Activated CD8-positive, alpha-beta memory T cell treated with anti-CD3 and anti-CD28 coated beads, Interleukin-2, amount 10 ng/mL, durations not matched to agents 7 days and 5 days (primary cell): ENCODE measurements at regions of chr14 and their contacts with region 1.

Region 1: GRCh38 chr14:60331201-60332045 is 82.4 kb downstream of the PPM1A start:
- DNase-seq: peak; percentile 88
- ATAC-seq: peak; percentile 86
- H3K4me3 Mint-ChIP-seq: peak overlapping the region; percentile 88
- H3K27ac Mint-ChIP-seq: peak overlapping the region; percentile 98
- H3K4me1 Mint-ChIP-seq: peaks cover 38% of the 10 kb centered on the region
- H3K27me3 Mint-ChIP-seq: peaks cover 39% of the 10 kb centered on the region

Region 2: DNA sequence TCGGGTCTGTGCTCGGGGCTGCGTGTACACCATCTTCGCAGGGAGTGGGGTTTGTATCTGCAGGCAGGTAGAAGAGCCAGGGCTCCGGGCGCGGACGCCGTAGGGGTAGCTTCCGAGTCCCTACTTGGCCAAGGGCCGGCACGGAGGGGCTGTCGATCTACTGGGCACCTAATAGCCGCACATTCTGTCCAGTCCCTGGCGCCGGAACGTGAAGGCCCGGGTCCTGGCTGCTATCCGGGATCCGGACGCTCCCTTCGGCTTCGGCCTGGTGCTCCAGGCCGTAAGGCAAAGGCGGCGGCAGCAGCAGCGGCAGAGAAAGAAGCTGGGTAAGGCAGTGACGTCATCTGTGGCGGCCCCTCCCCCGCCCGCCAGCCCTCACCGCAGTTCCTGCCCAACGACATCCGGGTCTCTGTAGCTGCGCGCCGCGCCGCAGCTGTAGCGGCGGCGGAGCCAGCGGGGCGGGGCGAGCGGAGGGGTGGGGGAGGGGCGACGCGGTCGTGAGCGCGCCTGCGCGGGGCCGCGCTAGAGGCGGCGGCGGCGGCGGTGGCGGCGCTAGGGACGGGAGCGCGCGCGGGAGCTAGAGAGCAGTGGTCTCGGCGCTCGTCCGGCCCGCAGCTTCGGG is 82.6 kb before region 1 on chr14 and contains the start of gene PPM1A:
- CTCF ChIA-PET with region 1: interaction called, 25 read pairs
- DNase-seq: peak; percentile 95
- ATAC-seq: peak; percentile 76
- H3K4me3 Mint-ChIP-seq: peak within 1 kb of the TSS; percentile 86
- H3K27ac Mint-ChIP-seq: peak within 1 kb of the TSS; percentile 99
- H3K4me1 Mint-ChIP-seq: peaks cover 46% of the 10 kb centered on the region
- H3K27me3 Mint-ChIP-seq: no peaks in the 10 kb centered on the region
- total RNA-seq, gene PPM1A: 44.0 to 54.6 TPM

Region 3: GRCh38 chr14:60266021-60266937 is 65.1 kb before region 1 on chr14:
- CTCF ChIA-PET with region 1: interaction called, 21 read pairs
- DNase-seq: no peak
- ATAC-seq: no peak
- H3K4me3 Mint-ChIP-seq: no peak overlapping the region
- H3K27ac Mint-ChIP-seq: no peak overlapping the region
- H3K4me1 Mint-ChIP-seq: peaks cover under 1% of the 10 kb centered on the region
- H3K27me3 Mint-ChIP-seq: no peaks in the 10 kb centered on the region

Region 4: DNA sequence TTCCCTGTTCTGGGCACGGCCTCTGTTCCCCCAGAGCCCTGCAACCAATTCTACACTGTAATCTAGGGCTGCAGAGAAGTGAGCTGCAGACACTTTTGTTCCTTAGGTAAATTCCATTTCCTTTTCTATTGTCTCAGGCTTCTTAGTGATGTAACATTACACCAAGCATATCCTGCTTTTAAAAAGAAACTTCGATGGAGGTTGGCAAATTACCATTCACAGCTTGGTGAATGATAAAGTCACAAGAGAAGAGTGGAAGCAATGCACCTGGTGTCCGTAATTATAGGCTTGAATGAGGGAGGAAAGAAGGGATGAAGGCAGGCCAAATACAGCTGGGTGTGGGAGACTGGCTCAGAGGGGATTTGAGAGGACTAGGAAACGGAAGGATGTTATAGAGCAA is 13.8 kb before region 1 on chr14:
- CTCF ChIA-PET with region 1: interaction called, 11 read pairs
- DNase-seq: no peak
- ATAC-seq: no peak
- H3K4me3 Mint-ChIP-seq: no peak overlapping the region
- H3K27ac Mint-ChIP-seq: no peak overlapping the region
- H3K4me1 Mint-ChIP-seq: no peaks in the 10 kb centered on the region
- H3K27me3 Mint-ChIP-seq: peaks cover 16% of the 10 kb centered on the region

Region 5: DNA sequence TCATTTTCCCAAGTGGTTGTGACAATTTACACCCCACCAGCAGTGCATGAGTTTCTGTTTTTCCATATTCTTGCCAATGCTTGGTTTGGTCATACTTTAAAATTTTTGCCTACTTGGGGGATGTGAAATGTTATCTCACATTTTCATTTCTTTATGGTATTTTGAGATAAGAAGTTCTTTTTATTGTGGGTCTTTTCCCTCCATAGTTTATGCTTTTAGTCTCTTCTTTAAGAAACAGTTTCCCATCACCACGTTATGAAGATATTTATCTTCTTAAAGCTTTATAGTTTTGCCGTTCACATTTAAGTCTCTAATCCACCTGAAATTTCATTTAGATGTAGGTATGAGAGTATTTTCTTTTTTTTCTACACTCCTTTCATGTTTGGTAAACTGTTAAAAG is 13.3 kb after region 1 on chr14:
- CTCF ChIA-PET with region 1: interaction called, 28 read pairs
- DNase-seq: no peak
- ATAC-seq: no peak
- H3K4me3 Mint-ChIP-seq: no peak overlapping the region
- H3K27ac Mint-ChIP-seq: no peak overlapping the region
- H3K4me1 Mint-ChIP-seq: peaks cover 2% of the 10 kb centered on the region
- H3K27me3 Mint-ChIP-seq: peaks cover 22% of the 10 kb centered on the region

Region 6: DNA sequence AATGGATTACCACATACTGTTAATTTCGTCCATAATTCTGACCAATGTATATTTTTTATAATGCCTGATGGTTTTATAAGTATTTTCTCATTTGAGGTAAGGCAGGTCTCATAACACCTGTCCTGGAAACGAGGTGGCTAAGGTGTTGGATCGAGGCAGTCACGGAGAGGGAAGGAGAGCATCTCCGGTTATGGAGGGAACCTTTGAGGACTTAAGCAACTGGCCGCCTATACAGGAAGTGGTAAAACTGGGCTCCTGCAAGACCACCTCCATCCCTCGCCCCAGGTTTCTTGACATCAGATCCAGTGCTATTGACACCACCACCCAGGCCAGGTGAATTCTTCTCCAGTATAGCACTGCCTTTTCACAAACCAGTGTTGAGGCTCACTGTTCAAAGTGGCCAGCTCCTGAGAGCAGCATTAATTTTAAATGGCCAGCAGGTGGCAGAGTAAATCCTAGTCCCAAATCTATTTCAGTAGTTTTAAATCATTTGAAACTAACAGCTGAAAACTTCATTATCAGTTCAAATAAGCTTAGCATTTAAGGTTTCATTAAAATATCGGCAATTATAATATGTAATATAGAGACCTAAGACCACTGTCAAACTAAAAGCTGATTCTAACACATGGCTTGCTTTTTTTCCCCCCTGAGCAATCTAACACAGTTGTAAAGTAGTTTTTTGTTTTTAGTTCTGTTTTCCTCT is 18.4 kb after region 1 on chr14:
- CTCF ChIA-PET with region 1: interaction called, 28 read pairs
- DNase-seq: no peak
- ATAC-seq: no peak
- H3K4me3 Mint-ChIP-seq: no peak overlapping the region
- H3K27ac Mint-ChIP-seq: no peak overlapping the region
- H3K4me1 Mint-ChIP-seq: no peaks in the 10 kb centered on the region
- H3K27me3 Mint-ChIP-seq: peaks cover 25% of the 10 kb centered on the region

Region 7: GRCh38 chr14:60420050-60420449 is 88.6 kb after region 1 on chr14:
- CTCF ChIA-PET with region 1: no interaction called
- DNase-seq: no peak
- ATAC-seq: no peak
- H3K4me3 Mint-ChIP-seq: no peak overlapping the region
- H3K27ac Mint-ChIP-seq: no peak overlapping the region
- H3K4me1 Mint-ChIP-seq: no peaks in the 10 kb centered on the region
- H3K27me3 Mint-ChIP-seq: no peaks in the 10 kb centered on the region

Region 8: GRCh38 chr14:60561845-60562746 is 230.7 kb after region 1 on chr14:
- CTCF ChIA-PET with region 1: interaction called, 10 read pairs
- DNase-seq: peak; percentile 55
- ATAC-seq: peak; percentile 51
- H3K4me3 Mint-ChIP-seq: no peak overlapping the region
- H3K27ac Mint-ChIP-seq: no peak overlapping the region
- H3K4me1 Mint-ChIP-seq: no peaks in the 10 kb centered on the region
- H3K27me3 Mint-ChIP-seq: peaks cover 3% of the 10 kb centered on the region